Activated CD8-positive, alpha-beta T cell treated with anti-CD3 and anti-CD28 coated beads for 36 hours (primary cell): ENCODE measurements at regions of chr12 and their contacts with region 1.

Region 1: DNA sequence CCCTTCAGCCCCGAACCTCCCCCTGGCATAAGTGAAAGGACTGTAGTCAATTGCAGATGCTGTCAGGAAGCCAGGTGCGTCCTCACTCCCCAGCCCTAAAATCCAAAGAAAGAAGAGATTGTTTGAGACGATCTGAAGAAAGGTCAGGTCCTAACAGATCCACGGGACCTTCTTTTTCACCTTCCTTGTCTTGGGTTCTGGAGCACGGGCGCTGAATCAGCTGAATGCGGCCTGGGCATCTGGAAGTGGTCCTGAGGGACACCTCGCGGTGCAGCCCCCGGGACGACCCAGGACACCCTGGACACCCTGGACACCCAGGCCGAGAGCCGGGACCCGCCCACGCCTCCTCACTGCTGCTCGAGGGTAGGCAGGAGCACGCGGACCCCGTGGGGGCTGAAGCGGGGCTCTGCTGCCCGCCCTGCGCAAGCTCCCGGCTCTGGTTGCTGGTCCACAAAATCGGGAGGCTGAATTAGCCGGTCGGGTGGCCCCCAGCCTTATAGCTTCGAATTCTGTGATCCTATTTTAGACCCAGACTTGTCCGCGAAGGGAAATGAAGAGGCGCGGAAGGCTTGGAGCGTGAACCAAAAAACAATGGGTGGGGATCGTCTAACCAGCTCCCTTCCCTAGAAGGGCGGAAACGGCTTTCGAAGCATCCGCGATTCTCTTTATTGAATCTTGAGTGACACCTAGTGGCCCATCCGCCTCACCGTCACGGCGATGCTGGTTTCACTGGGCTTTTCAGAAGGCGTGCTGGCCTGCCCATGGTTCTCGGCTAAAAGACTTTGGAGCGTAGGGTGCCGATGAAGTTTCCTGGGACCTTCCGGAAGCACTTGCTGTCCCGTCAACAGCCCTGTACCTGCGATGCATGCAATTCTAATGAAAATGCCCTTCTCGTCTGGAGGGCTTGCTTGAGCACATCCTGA is 46.4 kb upstream of the PLXNC1 start:
- DNase-seq: peak; percentile 93
- ATAC-seq: peak; percentile 81
- H3K4me3 Mint-ChIP-seq: peak overlapping the region; percentile 77
- H3K27ac Mint-ChIP-seq: peak overlapping the region; percentile 75
- H3K4me1 Mint-ChIP-seq: peaks cover 18% of the 10 kb centered on the region
- H3K27me3 Mint-ChIP-seq: peaks cover 15% of the 10 kb centered on the region
- CTCF ChIP-seq: peak; percentile 72

Region 2: GRCh38 chr12:93502802-93503623 is 599.0 kb before region 1 on chr12:
- CTCF ChIA-PET with region 1: interaction called, 188 read pairs
- POLR2A ChIA-PET with region 1: interaction called, 7 read pairs
- intact Hi-C with region 1: loop called (anchors 2 kb)
- DNase-seq: peak; percentile 72
- ATAC-seq: peak; percentile 34
- H3K4me3 Mint-ChIP-seq: no peak overlapping the region
- H3K27ac Mint-ChIP-seq: no peak overlapping the region
- H3K4me1 Mint-ChIP-seq: peaks cover 12% of the 10 kb centered on the region
- H3K27me3 Mint-ChIP-seq: no peaks in the 10 kb centered on the region
- CTCF ChIP-seq: peak; percentile 87

Region 3: GRCh38 chr12:93569656-93570551 is 532.1 kb before region 1 on chr12:
- CTCF ChIA-PET with region 1: interaction called, 143 read pairs
- POLR2A ChIA-PET with region 1: interaction called, 18 read pairs
- intact Hi-C with region 1: loop called (anchors 1 kb)
- DNase-seq: peak; percentile 86
- ATAC-seq: peak; percentile 56
- H3K4me3 Mint-ChIP-seq: peak overlapping the region; percentile 81
- H3K27ac Mint-ChIP-seq: peak overlapping the region; percentile 88
- H3K4me1 Mint-ChIP-seq: peaks cover 26% of the 10 kb centered on the region
- H3K27me3 Mint-ChIP-seq: peaks cover 11% of the 10 kb centered on the region
- CTCF ChIP-seq: peak; percentile 79

Region 4: DNA sequence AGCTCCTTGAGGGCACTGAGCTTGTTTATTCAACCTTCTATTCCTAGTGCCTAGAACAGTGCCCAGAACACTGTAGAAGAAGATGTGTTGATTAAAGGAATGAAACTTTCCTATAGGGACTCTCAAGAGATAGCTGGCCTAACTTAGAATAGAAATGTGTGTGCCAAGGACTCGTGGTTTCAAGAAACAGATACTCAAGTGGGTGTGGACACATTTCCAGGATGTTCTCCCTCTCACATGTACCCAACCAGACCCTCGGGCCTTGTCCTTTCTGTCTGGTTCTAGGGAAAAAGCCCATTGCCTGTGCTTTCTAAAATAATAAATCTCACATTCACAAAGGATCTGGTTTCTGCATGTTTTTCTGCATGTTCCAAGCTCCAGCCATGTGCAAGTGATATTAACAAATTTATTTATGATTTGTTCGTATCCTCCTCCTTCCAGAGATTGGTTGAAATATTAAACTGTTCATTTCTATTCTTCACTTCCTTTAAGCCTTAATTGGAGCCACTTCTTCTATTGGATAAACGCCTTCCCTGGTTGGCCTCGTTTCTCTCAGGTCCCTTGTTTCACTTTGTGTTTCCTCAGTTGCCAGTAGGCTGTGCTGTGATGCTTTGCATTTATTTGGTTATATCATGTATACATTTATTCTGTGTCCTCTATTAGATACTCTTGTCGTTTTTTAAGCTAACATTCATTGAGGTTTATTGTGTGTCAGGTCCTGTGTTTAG is 335.0 kb before region 1 on chr12:
- CTCF ChIA-PET with region 1: interaction called, 152 read pairs
- POLR2A ChIA-PET with region 1: interaction called, 10 read pairs
- intact Hi-C with region 1: loop called (anchors 5 kb)
- DNase-seq: peak; percentile 55
- ATAC-seq: peak; percentile 80
- H3K4me3 Mint-ChIP-seq: no peak overlapping the region
- H3K27ac Mint-ChIP-seq: no peak overlapping the region
- H3K4me1 Mint-ChIP-seq: peaks cover 38% of the 10 kb centered on the region
- H3K27me3 Mint-ChIP-seq: no peaks in the 10 kb centered on the region
- CTCF ChIP-seq: peak; percentile 55

Region 5: GRCh38 chr12:94020335-94020734 is 81.7 kb before region 1 on chr12:
- CTCF ChIA-PET with region 1: interaction called, 17 read pairs
- POLR2A ChIA-PET with region 1: no interaction called
- intact Hi-C with region 1: no loop called
- DNase-seq: no peak
- ATAC-seq: no peak
- H3K4me3 Mint-ChIP-seq: no peak overlapping the region
- H3K27ac Mint-ChIP-seq: no peak overlapping the region
- H3K4me1 Mint-ChIP-seq: no peaks in the 10 kb centered on the region
- H3K27me3 Mint-ChIP-seq: no peaks in the 10 kb centered on the region
- CTCF ChIP-seq: no peak

Region 6: GRCh38 chr12:94080348-94081009 is 21.5 kb before region 1 on chr12:
- CTCF ChIA-PET with region 1: interaction called, 66 read pairs
- POLR2A ChIA-PET with region 1: interaction called, 5 read pairs
- intact Hi-C with region 1: no loop called
- DNase-seq: no peak
- ATAC-seq: no peak
- H3K4me3 Mint-ChIP-seq: no peak overlapping the region
- H3K27ac Mint-ChIP-seq: no peak overlapping the region
- H3K4me1 Mint-ChIP-seq: peaks cover 8% of the 10 kb centered on the region
- H3K27me3 Mint-ChIP-seq: peaks cover 5% of the 10 kb centered on the region
- CTCF ChIP-seq: no peak